ENCODE measurements at regions of chr7 and their contacts with region 1.

Region 1: GRCh38 chr7:91850455-91850854 is 30.0 kb downstream of the MTERF1 start:
- DNase-seq: no peak
- ATAC-seq: no peak
- H3K4me3 Mint-ChIP-seq: no peak overlapping the region
- H3K27ac Mint-ChIP-seq: no peak overlapping the region
- H3K4me1 Mint-ChIP-seq: no peaks in the 10 kb centered on the region
- H3K27me3 Mint-ChIP-seq: no peaks in the 10 kb centered on the region

Region 2: GRCh38 chr7:91787931-91788330 is 62.5 kb before region 1 on chr7:
- CTCF ChIA-PET with region 1: no interaction called
- POLR2A ChIA-PET with region 1: no interaction called
- DNase-seq: no peak
- ATAC-seq: no peak
- H3K4me3 Mint-ChIP-seq: no peak overlapping the region
- H3K27ac Mint-ChIP-seq: no peak overlapping the region
- H3K4me1 Mint-ChIP-seq: no peaks in the 10 kb centered on the region
- H3K27me3 Mint-ChIP-seq: peaks cover 4% of the 10 kb centered on the region

Region 3: DNA sequence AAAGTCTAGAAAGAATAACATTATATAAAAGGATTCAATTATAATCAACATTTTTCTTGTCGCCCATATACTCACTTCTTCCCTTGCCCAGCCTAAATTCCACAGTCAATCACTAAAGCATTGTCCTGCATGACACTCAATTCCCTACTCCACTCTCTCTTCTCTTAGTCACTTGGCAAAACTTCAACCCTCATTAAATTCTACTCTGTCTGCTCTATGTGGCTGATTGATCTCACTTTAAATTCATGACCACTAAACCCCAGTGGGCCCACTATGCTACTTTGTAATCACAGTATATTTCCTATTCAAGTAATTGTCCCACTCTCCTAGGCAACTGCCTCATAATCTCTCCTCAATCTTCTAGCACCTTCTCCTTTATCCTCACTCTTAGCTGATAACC is 24.1 kb before region 1 on chr7:
- CTCF ChIA-PET with region 1: interaction called, 22 read pairs
- POLR2A ChIA-PET with region 1: no interaction called
- DNase-seq: no peak
- ATAC-seq: no peak
- H3K4me3 Mint-ChIP-seq: no peak overlapping the region
- H3K27ac Mint-ChIP-seq: no peak overlapping the region
- H3K4me1 Mint-ChIP-seq: no peaks in the 10 kb centered on the region
- H3K27me3 Mint-ChIP-seq: no peaks in the 10 kb centered on the region